ENCODE measurements at regions of chr2 and their contacts with region 1.

Region 1: GRCh38 chr2:45595721-45596435 is 15.2 kb downstream of the SRBD1 start:
- DNase-seq: no peak
- ATAC-seq: no peak
- H3K4me3 ChIP-seq: no peak overlapping the region
- H3K27ac ChIP-seq: no peak overlapping the region
- H3K4me1 ChIP-seq: peaks cover 5% of the 10 kb centered on the region; the same call in 1 of the 3 replicates
- CTCF ChIP-seq: no peak
- EP300 ChIP-seq: no peak
- POLR2A ChIP-seq: no peak
- RAD21 ChIP-seq: no peak

Region 2: GRCh38 chr2:45570671-45571334 is 25.1 kb before region 1 on chr2:
- CTCF ChIA-PET with region 1: no interaction called
- POLR2A ChIA-PET with region 1: no interaction called
- DNase-seq: no peak
- ATAC-seq: no peak
- H3K4me3 ChIP-seq: no peak overlapping the region
- H3K27ac ChIP-seq: no peak overlapping the region
- H3K4me1 ChIP-seq: no peaks in the 10 kb centered on the region
- CTCF ChIP-seq: no peak
- EP300 ChIP-seq: no peak
- POLR2A ChIP-seq: no peak
- RAD21 ChIP-seq: no peak

Region 3: DNA sequence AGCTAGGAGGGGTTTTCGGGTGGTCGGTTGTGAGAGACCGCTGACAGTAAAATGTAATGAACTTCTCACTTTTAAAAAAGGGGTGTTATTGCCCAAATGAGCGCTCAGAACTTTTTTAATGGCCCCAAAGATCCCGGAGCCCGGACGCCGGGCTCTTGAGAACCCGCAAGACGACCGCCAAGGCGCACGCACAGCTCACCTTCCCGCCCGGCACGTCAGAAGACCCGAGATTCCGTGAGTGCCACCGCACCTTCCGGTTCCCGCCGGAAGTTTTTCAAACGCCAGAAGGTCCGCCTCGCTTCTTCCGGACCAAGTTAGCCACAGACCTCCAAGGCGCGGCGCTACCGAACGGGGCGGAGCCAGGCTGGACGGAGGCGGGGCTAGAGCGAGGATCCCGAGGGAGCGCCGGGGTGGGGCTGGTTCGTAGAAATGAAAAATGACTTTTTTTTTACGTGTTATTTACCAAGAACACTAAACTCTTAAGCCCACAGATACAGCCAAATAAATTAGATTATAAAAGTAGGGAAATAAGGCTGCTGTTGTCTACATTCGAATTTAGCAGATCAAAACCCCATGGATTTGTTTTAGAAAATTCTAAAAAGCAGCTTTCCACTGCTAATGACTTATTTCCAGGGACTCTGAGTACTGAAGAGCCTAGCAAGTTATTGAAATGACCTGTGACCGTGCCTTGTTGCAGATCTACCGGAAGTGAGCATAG is 15.3 kb after region 1 on chr2 and contains the start of gene SRBD1:
- CTCF ChIA-PET with region 1: interaction called, 20 read pairs
- POLR2A ChIA-PET with region 1: no interaction called
- DNase-seq: peak; percentile 87 to 97
- ATAC-seq: peak; percentile 97 to 98
- H3K4me3 ChIP-seq: peak within 1 kb of the TSS; percentile 76
- H3K27ac ChIP-seq: peak within 1 kb of the TSS; percentile 87 to 89
- H3K4me1 ChIP-seq: peaks cover 37% of the 10 kb centered on the region
- CTCF ChIP-seq: no peak
- EP300 ChIP-seq: no peak
- POLR2A ChIP-seq: peak; percentile 81
- RAD21 ChIP-seq: no peak
- polyA plus RNA-seq, gene SRBD1: 10.6 and 13.7 TPM in 2 replicates